ENCODE measurements at regions of chr16 and their contacts with region 1.

Region 1: GRCh38 chr16:10971560-10971961 is 27.2 kb downstream of the CLEC16A start:
- DNase-seq: peak; percentile 64
- ATAC-seq: peak; percentile 39
- H3K4me3 ChIP-seq: no peak overlapping the region
- H3K4me3 Mint-ChIP-seq: no peak overlapping the region
- H3K27ac ChIP-seq: no peak overlapping the region
- H3K27ac Mint-ChIP-seq: no peak overlapping the region
- H3K4me1 ChIP-seq: no peaks in the 10 kb centered on the region
- H3K4me1 Mint-ChIP-seq: peaks cover 6% of the 10 kb centered on the region
- H3K27me3 ChIP-seq: no peaks in the 10 kb centered on the region
- H3K27me3 Mint-ChIP-seq: no peaks in the 10 kb centered on the region
- CTCF ChIP-seq: peak; percentile 89

Region 2: DNA sequence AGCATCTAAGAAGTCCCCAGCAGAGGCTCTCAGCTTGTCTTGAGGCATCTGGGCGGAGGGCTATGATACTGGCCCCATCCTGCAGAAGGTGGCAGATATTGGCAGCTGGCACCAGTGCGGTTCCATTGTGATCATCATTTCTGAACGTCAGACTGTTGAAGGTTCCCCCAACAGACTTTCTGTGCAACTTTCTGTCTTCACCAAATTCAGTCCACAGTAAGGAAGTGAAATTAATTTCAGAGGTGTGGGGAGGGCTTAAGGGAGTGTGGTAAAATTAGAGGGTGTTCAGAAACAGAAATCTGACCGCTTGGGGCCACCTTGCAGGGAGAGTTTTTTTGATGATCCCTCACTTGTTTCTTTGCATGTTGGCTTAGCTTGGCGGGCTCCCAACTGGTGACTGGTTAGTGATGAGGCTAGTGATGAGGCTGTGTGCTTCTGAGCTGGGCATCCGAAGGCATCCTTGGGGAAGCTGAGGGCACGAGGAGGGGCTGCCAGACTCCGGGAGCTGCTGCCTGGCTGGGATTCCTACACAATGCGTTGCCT is 94.7 kb before region 1 on chr16 and contains the start of gene CIITA:
- CTCF ChIA-PET with region 1: no interaction called
- POLR2A ChIA-PET with region 1: no interaction called
- intact Hi-C with region 1: no loop called
- DNase-seq: peak; percentile 93
- ATAC-seq: peak; percentile 70
- H3K4me3 ChIP-seq: peak within 1 kb of the TSS; percentile 77 to 97 (median 91)
- H3K4me3 Mint-ChIP-seq: peak within 1 kb of the TSS; percentile 100
- H3K27ac ChIP-seq: peak within 1 kb of the TSS; percentile 86 to 88
- H3K27ac Mint-ChIP-seq: peak within 1 kb of the TSS; percentile 92
- H3K4me1 ChIP-seq: peaks cover 57 to 73% of the 10 kb centered on the region in 2 donors
- H3K4me1 Mint-ChIP-seq: peaks cover 61% of the 10 kb centered on the region
- H3K27me3 ChIP-seq: no peaks in the 10 kb centered on the region
- H3K27me3 Mint-ChIP-seq: no peaks in the 10 kb centered on the region
- CTCF ChIP-seq: no peak
- total RNA-seq, gene CIITA: 719 and 738 TPM in 2 replicates

Region 3: DNA sequence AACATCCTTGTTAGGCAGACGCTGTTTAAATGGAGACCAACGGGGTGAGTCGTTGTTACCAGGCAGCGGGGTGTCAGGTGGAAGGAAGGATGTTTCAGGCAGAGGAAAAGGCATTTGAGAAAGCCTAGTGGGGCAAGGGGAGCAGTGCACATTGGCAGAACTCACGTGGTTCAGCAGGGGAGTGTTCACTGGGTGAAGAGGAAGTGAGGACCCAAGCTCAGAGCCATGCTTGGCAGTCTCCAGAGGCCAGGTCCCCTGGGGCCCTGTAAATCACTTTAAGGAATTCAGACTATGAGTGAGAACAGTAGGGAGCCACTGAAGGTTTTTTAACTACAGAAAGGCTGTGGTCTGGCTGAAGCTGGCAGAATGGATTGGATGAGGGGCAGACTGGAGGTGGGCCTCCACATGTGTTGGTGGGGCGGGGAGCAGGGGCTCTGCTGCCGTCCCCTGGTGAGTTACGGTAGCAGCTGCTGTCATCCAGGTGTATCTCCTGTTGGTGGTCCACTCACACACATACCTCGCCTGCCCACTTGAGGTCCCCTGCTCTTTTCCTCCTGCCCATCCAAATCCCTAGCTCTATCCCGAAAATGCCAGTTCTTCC is 22.1 kb before region 1 on chr16:
- CTCF ChIA-PET with region 1: interaction called, 142 read pairs
- POLR2A ChIA-PET with region 1: no interaction called
- intact Hi-C with region 1: no loop called
- DNase-seq: peak; percentile 91
- ATAC-seq: peak; percentile 91
- H3K4me3 ChIP-seq: peak overlapping the region in 2 of 5 experiments; percentile 8 to 14
- H3K4me3 Mint-ChIP-seq: peak overlapping the region; percentile 80
- H3K27ac ChIP-seq: peak overlapping the region; percentile 67 to 78
- H3K27ac Mint-ChIP-seq: peak overlapping the region; percentile 96
- H3K4me1 ChIP-seq: peaks cover 52 to 63% of the 10 kb centered on the region in 2 donors
- H3K4me1 Mint-ChIP-seq: peaks cover 75% of the 10 kb centered on the region
- H3K27me3 ChIP-seq: no peaks in the 10 kb centered on the region
- H3K27me3 Mint-ChIP-seq: no peaks in the 10 kb centered on the region
- CTCF ChIP-seq: peak; percentile 59